Dendritic cell treated with granulocyte-macrophage colony-stimulating factor and Interleukin-4, amounts not matched to agents 40 ng/mL and 50 ng/mL, for 4 days (primary cell): ENCODE measurements at regions of chr7 and their contacts with region 1.

Region 1: GRCh38 chr7:101410743-101411507 is 48.2 kb downstream of the COL26A1 start:
- H3K4me3 Mint-ChIP-seq: peak overlapping the region; percentile 4
- H3K27ac Mint-ChIP-seq: peak overlapping the region; percentile 55
- H3K4me1 Mint-ChIP-seq: peaks cover 13% of the 10 kb centered on the region
- H3K27me3 Mint-ChIP-seq: peaks cover 6% of the 10 kb centered on the region

Region 2: GRCh38 chr7:101363734-101364374 is 47.1 kb before region 1 on chr7:
- intact Hi-C with region 1: loop called (anchors 2 kb)
- H3K4me3 Mint-ChIP-seq: peak overlapping the region; percentile 68
- H3K27ac Mint-ChIP-seq: no peak overlapping the region
- H3K4me1 Mint-ChIP-seq: peaks cover 13% of the 10 kb centered on the region
- H3K27me3 Mint-ChIP-seq: peaks cover 73% of the 10 kb centered on the region